A673 (cell line): ENCODE measurements at regions of chr15 and their contacts with region 1.

Region 1: DNA sequence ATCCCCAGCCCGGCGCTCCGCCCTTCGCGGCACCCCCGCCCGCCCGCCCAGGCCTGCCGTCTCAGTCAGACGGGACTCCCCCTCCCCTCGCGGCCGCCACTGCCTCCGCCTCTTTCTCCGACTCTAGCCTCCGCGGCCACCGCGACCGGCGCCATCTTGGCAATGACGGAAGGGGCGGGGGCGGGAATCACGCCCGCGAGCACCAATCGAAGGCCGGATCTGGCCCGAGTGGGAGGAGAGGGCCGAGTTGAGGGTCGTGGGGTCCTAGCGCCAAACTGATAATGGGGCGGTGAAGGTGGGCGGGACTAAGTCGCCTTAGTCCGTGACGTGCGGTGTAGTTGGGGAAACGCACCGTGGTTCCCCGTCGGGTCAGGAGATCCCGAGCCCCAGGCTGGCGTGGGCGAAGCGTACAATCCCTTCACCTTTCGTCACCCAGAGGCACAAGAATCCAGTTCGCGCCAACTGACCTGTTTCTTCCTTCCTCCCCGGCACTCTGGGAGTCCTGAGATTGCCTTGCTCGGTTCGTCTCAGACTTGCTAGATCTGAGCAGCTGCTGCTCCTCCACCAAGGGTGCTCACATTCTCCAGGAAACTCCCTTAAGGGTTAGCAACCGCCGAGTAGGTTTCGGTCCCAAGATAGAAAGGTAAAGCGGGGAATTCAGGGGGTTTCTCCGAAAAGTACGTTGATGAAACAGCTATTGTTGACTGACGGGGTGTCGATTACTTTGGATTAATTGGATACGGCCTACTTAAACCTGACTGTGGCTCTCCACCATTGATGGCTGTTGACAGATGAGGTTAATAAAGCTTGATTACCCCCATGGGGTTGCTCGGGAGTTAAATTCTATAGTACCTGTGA is at the start of gene DENND4A:
- DNase-seq: peak; percentile 99
- H3K4me3 ChIP-seq: peak within 1 kb of the TSS; percentile 80
- H3K27ac ChIP-seq: peak within 1 kb of the TSS; percentile 86
- H3K4me1 ChIP-seq: peaks cover 21% of the 10 kb centered on the region
- H3K27me3 ChIP-seq: no peaks in the 10 kb centered on the region
- CTCF ChIP-seq: no peak
- total RNA-seq, gene DENND4A: 13.2 TPM in 2 replicates

Region 2: GRCh38 chr15:65869127-65869953 is 77.0 kb after region 1 on chr15 and contains the start of gene RAB11A:
- CTCF ChIA-PET with region 1: no interaction called
- POLR2A ChIA-PET with region 1: no interaction called
- intact Hi-C with region 1: loop called (anchors 1 kb)
- DNase-seq: peak; percentile 98
- H3K4me3 ChIP-seq: peak within 1 kb of the TSS; percentile 90
- H3K27ac ChIP-seq: peak within 1 kb of the TSS; percentile 89
- H3K4me1 ChIP-seq: peaks cover 12% of the 10 kb centered on the region
- H3K27me3 ChIP-seq: no peaks in the 10 kb centered on the region
- CTCF ChIP-seq: peak; percentile 50
- total RNA-seq, gene RAB11A: 220 and 227 TPM in 2 replicates